ENCODE measurements at regions of chr9 and their contacts with region 1.

Region 1: GRCh38 chr9:108439911-108440315 is 415.9 kb downstream of the ACTL7B start:
- DNase-seq: no peak
- ATAC-seq: no peak
- H3K4me3 ChIP-seq: no peak overlapping the region
- H3K27ac ChIP-seq: no peak overlapping the region
- H3K4me1 ChIP-seq: no peaks in the 10 kb centered on the region
- H3K27me3 ChIP-seq: no peaks in the 10 kb centered on the region
- CTCF ChIP-seq: no peak

Region 2: GRCh38 chr9:107465467-107466451 is 974.2 kb before region 1 on chr9:
- intact Hi-C with region 1: loop called in 2 of 10 experiments (anchors 10 kb)
- DNase-seq: peak; percentile 55 to 80
- ATAC-seq: peak; percentile 97 to 99 (median 98)
- H3K4me3 ChIP-seq: peak overlapping the region; percentile 30 to 76 (median 64)
- H3K27ac ChIP-seq: peak overlapping the region in 6 of 10 donors; percentile 28 to 66 (median 53)
- H3K4me1 ChIP-seq: peaks cover 0 to 14% (median 6%) of the 10 kb centered on the region in 9 donors
- H3K27me3 ChIP-seq: peaks cover 0 to 20% (median 0%) of the 10 kb centered on the region in 7 donors
- CTCF ChIP-seq: peak; percentile 82 to 97 (median 94)